ENCODE measurements at regions of chr12 and their contacts with region 1.

Region 1: DNA sequence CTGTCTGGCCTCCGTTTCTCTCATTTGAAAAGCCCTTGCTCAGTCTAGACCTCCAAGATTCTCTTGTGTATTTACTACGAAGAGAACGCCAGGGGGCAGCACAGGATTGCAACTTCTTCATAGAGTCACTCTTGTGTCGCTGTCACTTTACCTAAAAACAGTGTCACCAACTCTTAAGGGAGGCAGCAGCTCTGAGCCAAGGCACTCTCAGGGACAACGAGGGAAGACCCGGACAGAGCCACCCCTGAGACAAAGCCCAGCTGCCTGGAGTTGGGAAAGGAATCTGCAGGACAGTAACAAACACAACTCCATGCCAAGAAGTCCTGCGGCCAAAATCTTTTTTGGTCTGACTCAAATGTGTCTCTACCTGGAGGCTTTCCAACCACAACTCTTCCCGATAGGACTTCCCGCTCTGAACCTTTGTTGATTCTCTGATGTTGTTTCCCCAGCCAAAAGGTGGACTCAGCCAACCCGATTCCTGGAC is 9.6 kb upstream of the RPAP3 start:
- DNase-seq: peak; percentile 63
- H3K4me3 ChIP-seq: no peak overlapping the region; a peak in 1 of 4 replicates
- H3K27ac ChIP-seq: no peak overlapping the region
- H3K4me1 ChIP-seq: peaks cover 4 to 14% of the 10 kb centered on the region in 2 experiments; a peak in 2 of 4 replicates
- H3K27me3 ChIP-seq: no peaks in the 10 kb centered on the region
- CTCF ChIP-seq: peak; percentile 86
- EP300 ChIP-seq: no peak
- RAD21 ChIP-seq: peak; percentile 98

Region 2: DNA sequence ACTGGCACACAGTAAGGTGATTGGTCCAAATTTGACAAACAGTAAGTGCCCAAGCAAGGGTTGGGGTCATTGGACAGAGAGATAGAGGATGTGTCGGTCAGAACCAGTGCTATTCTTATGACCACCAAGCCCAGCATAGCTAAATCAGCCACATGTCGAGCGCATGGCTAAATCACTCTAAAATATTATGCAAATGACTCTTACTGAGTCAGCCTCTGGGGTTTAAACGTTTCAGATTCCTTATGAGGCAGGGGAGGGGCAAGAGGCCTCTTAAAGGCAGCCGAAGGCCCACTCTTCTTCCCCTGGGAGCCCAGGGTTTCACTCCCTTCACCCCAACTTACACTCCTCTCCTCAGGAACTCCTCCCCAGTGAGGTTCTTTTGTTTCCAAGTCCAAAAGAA is 10.5 kb after region 1 on chr12:
- CTCF ChIA-PET with region 1: interaction called, 124 read pairs
- POLR2A ChIA-PET with region 1: no interaction called
- DNase-seq: no peak
- H3K4me3 ChIP-seq: no peak overlapping the region
- H3K27ac ChIP-seq: no peak overlapping the region
- H3K4me1 ChIP-seq: peaks cover 0 to 14% of the 10 kb centered on the region in 2 experiments; a peak in 2 of 4 replicates
- H3K27me3 ChIP-seq: no peaks in the 10 kb centered on the region
- CTCF ChIP-seq: no peak
- EP300 ChIP-seq: no peak
- RAD21 ChIP-seq: no peak

Region 3: DNA sequence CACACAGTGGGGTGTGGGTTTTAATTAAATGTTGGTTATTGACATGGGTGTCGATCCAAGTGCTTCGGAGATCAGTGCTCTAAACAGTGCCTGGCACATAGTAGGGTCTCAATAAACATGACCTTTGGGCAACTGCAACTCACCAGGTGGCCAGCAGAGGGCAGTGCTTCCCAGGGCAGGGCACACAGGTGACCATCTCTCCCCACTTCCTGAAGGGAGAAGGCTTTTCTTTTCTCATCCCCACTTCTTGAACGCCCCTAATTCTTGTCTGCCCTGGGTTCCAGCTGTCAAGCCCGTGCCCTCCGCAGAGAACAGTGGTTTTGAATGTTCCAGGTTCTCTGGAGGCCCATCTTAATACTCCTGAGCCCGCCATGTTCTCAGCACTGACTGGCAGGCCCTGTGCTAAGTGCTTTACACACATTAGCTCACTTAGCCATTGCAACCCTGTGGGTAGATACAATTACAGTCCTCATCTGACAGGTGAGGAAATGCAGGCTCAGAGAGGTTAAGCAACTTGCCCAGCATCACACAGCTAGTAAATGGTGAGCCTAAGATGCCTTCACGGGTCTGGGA is 26.9 kb after region 1 on chr12:
- CTCF ChIA-PET with region 1: interaction called, 298 read pairs
- POLR2A ChIA-PET with region 1: no interaction called
- DNase-seq: peak; percentile 72
- H3K4me3 ChIP-seq: no peak overlapping the region
- H3K27ac ChIP-seq: no peak overlapping the region
- H3K4me1 ChIP-seq: peaks cover 14 to 39% of the 10 kb centered on the region in 2 experiments; a peak in 3 of 4 replicates
- H3K27me3 ChIP-seq: no peaks in the 10 kb centered on the region
- CTCF ChIP-seq: peak; percentile 98
- EP300 ChIP-seq: no peak
- RAD21 ChIP-seq: peak; percentile 82

Region 4: DNA sequence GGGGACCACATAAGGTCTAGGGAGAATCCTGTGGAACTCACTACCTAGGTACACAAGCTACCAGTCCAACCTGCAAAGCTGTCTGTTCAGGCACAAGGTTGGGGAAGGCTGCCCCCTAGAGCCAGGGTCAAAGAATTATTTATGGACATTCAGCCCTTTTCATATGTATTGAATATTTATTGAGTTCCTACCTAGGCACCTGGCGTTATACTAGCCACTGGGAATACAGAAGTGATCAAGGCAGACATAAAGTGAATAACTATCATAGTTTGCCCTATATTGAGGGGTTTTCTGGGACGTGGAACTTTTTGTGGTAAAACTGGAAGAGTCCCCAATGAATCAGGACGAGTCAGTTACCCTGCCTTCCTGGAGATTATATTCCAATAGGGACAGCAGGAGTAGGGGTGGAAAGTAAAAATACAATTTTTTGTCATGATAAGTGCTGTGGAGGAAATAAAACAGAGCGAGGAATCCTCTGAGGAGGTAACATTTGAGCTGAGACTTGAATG is 51.8 kb after region 1 on chr12:
- CTCF ChIA-PET with region 1: interaction called, 1,294 read pairs
- POLR2A ChIA-PET with region 1: no interaction called
- DNase-seq: no peak
- H3K4me3 ChIP-seq: no peak overlapping the region
- H3K27ac ChIP-seq: no peak overlapping the region
- H3K4me1 ChIP-seq: peaks cover 7 to 37% of the 10 kb centered on the region in 2 experiments; a peak in 2 of 4 replicates
- H3K27me3 ChIP-seq: no peaks in the 10 kb centered on the region
- CTCF ChIP-seq: peak; percentile 54
- EP300 ChIP-seq: no peak
- RAD21 ChIP-seq: peak; percentile 79

Region 5: GRCh38 chr12:47812797-47813510 is 97.5 kb after region 1 on chr12:
- CTCF ChIA-PET with region 1: interaction called, 14 read pairs
- POLR2A ChIA-PET with region 1: no interaction called
- DNase-seq: no peak
- H3K4me3 ChIP-seq: peak overlapping the region in 1 of 2 experiments; percentile 36; a peak in 1 of 4 replicates
- H3K27ac ChIP-seq: peak overlapping the region; percentile 48 to 84
- H3K4me1 ChIP-seq: peaks cover 67 to 76% of the 10 kb centered on the region in 2 experiments
- H3K27me3 ChIP-seq: no peaks in the 10 kb centered on the region
- CTCF ChIP-seq: no peak
- EP300 ChIP-seq: 0 out of 4 replicates have a peak, but pooled peaks of 1 of the 2 experiments have one; percentile 36
- RAD21 ChIP-seq: no peak